Heart left ventricle (tissue), 16 donors: ENCODE measurements at regions of chr4 and their contacts with region 1.

Region 1: DNA sequence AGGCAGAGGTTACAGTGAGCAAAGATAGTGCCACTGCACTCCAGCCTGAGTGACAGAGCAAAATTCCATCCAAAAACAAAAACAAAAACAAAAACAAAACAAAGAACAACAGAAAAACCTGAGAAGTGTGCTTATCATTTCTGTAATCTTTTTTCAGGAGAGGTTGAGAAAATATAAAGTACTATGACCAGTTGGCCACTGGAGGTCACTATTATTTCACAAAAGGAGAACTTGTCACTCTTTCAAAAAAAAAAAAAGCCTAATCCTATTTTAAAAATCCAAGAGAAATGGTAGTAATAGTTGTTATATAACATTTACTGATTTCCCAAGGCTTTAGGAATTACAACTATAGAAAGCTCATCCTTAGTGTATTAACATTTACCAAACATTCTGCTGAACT is 24.9 kb upstream of the RNF150 start:
- DNase-seq: no peak
- ATAC-seq: no peak
- H3K4me3 ChIP-seq: no peak overlapping the region
- H3K27ac ChIP-seq: no peak overlapping the region
- H3K4me1 ChIP-seq: peaks cover 0 to 17% (median 2%) of the 10 kb centered on the region in 12 donors
- H3K27me3 ChIP-seq: no peaks in the 10 kb centered on the region
- CTCF ChIP-seq: peak; percentile 36 to 66 (median 56)
- POLR2A ChIP-seq: no peak

Region 2: DNA sequence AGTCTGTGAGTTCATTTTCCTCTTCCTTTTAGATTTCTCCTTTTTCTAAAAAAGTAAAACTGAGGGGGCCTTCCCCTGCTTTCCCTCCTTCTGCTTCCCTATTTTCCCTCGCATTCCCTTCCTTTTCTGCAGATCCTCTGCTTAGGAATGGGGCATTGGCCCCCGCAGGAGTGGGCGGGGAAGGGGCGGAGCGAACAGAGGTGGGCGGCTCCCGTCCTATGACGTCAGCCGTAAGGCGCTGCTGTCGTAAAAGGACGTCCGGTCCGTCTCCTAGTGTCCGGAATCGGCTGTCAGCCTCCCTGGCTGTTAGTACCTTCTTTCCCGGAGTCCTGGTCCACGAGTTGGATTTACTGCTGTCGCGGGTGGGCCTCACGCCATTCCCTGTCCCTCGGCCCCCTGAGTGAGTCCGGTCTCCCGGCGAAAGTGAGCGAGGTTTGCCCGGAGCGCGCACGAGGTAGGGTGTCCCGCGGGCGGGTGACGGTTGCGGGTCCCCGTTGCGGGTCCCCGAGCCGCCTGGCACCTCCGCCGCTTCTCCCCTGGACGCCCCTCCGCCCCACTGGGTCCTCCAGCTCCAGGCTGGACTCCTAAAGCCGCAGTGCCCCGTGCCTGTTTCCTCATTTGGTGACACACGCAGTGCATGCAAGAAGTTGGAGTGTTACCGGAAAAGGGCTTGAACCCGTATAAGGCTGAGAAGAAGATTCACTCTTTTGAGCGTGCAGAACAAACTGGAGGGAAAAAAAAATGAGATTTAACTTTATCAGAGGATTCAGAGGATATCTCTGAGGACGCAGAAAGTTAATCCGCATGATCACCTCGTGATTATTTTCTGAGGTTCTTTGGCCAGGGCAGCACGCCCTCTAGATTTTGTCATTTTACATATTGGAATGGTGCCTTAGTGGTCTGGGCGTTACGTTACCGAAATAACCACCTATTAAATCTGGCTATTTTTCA is 62.7 kb after region 1 on chr4 and contains the start of gene ZNF330:
- intact Hi-C with region 1: loop called in 1 of 10 experiments (anchors 5 kb)
- DNase-seq: peak; percentile 92 to 96 (median 94)
- ATAC-seq: peak; percentile 94 to 97 (median 96)
- H3K4me3 ChIP-seq: peak within 1 kb of the TSS; percentile 66 to 98 (median 83)
- H3K27ac ChIP-seq: peak within 1 kb of the TSS; percentile 89 to 99 (median 94)
- H3K4me1 ChIP-seq: peaks cover 0 to 53% (median 18%) of the 10 kb centered on the region in 12 donors
- H3K27me3 ChIP-seq: no peaks in the 10 kb centered on the region
- CTCF ChIP-seq: peak in 6 of 12 donors; percentile 12 to 43 (median 29)
- POLR2A ChIP-seq: peak; percentile 58 to 93
- total RNA-seq, gene ZNF330: 54.4 to 183 (median 141) TPM

Region 3: GRCh38 chr4:141307241-141307689 is 149.0 kb after region 1 on chr4:
- intact Hi-C with region 1: loop called in 2 of 10 experiments (anchors 10 kb)
- DNase-seq: peak; percentile 30 to 66 (median 37)
- ATAC-seq: peak; percentile 87 to 93 (median 92)
- H3K4me3 ChIP-seq: no peak overlapping the region
- H3K27ac ChIP-seq: peak overlapping the region in 4 of 12 donors; percentile 1 to 61 (median 31)
- H3K4me1 ChIP-seq: peaks cover 0 to 6% (median 0%) of the 10 kb centered on the region in 12 donors
- H3K27me3 ChIP-seq: no peaks in the 10 kb centered on the region
- CTCF ChIP-seq: peak; percentile 51 to 78 (median 69)
- POLR2A ChIP-seq: no peak

Region 4: DNA sequence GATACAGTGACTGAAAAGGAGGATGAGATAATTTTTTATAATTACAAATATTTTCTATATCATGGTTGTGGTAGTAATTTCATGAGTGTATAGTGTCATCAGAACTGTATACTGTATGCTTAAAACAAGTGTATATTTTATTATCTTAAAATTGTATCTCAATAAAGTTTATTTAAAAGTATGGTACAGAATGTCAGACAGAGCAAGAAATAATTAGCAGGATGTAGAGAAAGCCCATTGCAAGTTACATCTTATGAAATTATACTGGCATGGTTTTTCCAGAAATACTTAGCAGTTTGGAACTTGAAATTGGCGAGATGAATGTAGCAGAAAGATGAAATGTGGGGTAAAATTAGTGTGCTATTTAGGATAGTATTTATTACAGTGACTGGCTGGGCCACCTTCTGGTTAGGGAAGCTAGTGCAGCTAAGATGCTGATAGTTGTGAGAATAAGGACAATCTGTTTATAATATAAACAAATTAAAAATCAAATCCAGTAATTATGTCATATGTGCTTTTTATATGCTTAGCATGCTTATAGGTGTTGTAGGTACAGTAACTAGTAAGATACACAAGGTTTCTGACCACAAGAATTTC is 552.9 kb after region 1 on chr4:
- intact Hi-C with region 1: loop called in 2 of 10 experiments (anchors 5 to 10 kb)
- DNase-seq: no peak
- ATAC-seq: no peak
- H3K4me3 ChIP-seq: no peak overlapping the region
- H3K27ac ChIP-seq: no peak overlapping the region
- H3K4me1 ChIP-seq: peaks cover 0 to 5% (median 0%) of the 10 kb centered on the region in 12 donors
- H3K27me3 ChIP-seq: no peaks in the 10 kb centered on the region
- CTCF ChIP-seq: peak; percentile 44 to 78 (median 62)
- POLR2A ChIP-seq: no peak